Activated CD4-positive, alpha-beta T cell treated with anti-CD3 and anti-CD28 coated beads, Interleukin-2, amount 10 ng/mL, durations not matched to agents 24 days and 14 days (primary cell): ENCODE measurements at regions of chr2 and their contacts with region 1.

Region 1: GRCh38 chr2:219498280-219499057 is at the start of gene GMPPA:
- DNase-seq: peak; percentile 99
- H3K4me3 Mint-ChIP-seq: peak within 1 kb of the TSS; percentile 97
- H3K27ac Mint-ChIP-seq: peak within 1 kb of the TSS; percentile 83
- H3K4me1 Mint-ChIP-seq: peaks cover 26% of the 10 kb centered on the region
- H3K27me3 Mint-ChIP-seq: peaks cover 39% of the 10 kb centered on the region
- total RNA-seq, gene GMPPA: 45.5 and 46.0 TPM in 2 replicates

Region 2: DNA sequence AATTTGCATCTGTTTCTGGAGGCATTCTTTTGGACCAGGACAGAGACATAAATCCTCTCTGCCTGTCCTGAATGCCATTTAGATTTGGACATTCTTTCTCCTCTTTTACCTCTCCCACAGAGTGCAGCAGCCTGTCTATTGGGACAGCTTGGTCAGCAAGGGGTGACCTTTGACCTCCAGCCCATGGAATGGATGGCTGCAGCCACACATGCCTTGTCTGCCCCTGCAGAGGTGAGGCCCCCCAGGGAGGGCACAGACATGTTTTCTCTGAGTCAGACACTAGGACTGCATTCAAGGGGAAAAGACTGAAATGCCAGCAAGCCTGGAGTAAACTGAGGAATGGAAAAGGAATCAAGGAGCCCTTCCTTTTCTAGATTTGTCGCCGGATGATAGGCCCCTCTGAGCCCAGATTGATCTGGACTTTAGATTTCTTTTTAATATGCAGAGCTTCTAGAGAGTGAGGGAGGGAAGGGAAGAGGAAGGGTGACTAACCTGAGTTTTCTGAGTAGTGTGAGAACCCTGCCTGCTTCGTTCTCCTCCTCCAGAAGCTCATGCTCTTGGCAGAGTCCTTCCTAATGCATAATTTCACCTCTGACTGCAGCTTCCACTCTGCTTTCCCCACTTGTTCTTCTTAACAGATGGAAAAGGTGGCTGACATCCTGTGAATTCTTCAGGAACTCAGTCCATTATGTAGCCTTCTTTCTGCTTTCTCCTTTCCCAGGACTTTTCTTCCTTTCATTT is 803.9 kb before region 1 on chr2:
- intact Hi-C with region 1: no loop called
- DNase-seq: no peak
- H3K4me3 Mint-ChIP-seq: no peak overlapping the region
- H3K27ac Mint-ChIP-seq: no peak overlapping the region
- H3K4me1 Mint-ChIP-seq: no peaks in the 10 kb centered on the region
- H3K27me3 Mint-ChIP-seq: no peaks in the 10 kb centered on the region

Region 3: DNA sequence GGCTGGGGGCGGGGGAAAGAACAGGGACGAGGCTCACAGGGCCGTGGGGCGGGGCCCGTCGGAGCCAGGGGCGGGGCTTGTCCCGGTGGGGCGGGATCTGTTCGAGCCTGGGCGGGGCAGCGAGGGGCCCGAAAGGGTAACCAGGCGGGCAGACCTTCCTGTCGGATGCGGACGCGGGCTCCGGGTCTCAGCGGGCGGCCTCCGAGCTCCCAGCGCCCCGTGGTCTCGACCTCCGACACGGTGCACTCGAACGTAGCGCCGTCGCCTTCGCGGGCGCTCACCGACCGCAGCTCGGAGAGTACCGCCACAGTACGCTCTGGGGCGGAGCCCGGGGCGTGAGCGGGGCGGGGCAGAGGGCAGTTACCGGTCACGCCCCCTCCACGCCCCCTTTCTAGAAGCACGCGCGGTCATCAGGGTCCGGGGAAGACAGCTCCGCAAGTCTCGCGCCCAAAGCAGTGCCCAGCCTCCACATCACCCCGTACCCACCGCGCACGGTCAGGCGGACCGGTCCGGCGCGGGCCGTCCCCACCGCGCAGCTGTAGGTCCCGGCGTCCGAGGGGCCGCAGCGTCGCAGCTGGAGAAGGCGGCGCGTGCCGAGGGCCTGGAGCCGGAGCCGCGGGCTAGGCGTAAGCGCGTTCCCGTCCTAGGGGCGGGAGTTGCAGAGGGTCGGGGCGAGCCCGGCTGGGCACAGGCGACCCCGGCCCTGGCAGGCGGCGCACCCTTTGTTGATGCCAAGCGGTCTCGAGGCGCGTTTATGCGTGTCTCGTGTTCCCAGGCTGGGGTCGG is 54.1 kb after region 1 on chr2:
- intact Hi-C with region 1: loop called (anchors 1 kb)
- DNase-seq: peak; percentile 96
- H3K4me3 Mint-ChIP-seq: peak overlapping the region; percentile 88
- H3K27ac Mint-ChIP-seq: peak overlapping the region; percentile 58
- H3K4me1 Mint-ChIP-seq: peaks cover 5% of the 10 kb centered on the region
- H3K27me3 Mint-ChIP-seq: peaks cover 23% of the 10 kb centered on the region